CD4-positive, alpha-beta T cell (primary cell): ENCODE measurements at regions of chr15 and their contacts with region 1.

Region 1: GRCh38 chr15:95247099-95247984 is 1016.0 kb downstream of the MCTP2 start:
- DNase-seq: no peak
- ATAC-seq: no peak
- H3K4me3 ChIP-seq: no peak overlapping the region
- H3K4me3 Mint-ChIP-seq: no peak overlapping the region
- H3K27ac ChIP-seq: no peak overlapping the region
- H3K27ac Mint-ChIP-seq: no peak overlapping the region
- H3K4me1 ChIP-seq: no peaks in the 10 kb centered on the region
- H3K4me1 Mint-ChIP-seq: no peaks in the 10 kb centered on the region
- H3K27me3 ChIP-seq: no peaks in the 10 kb centered on the region
- H3K27me3 Mint-ChIP-seq: no peaks in the 10 kb centered on the region
- CTCF ChIP-seq: no peak

Region 2: DNA sequence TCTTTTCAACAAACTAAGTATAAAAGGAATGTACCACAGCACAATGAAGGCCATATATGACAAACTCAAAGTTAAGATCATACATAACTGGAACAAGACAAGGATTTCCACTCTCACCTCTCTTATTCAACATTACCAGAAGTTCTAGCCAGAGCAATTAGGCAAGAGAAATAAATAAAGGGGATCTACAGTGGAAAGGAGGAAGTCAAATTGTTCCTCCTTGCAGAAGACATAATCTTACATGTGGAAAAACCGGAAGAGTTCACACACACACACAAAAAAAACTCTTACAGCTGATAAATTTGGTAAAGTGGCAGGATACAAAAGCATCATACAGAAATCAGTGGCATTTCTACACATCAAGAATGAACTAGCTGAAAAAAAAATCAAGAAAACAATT is 738.1 kb before region 1 on chr15:
- CTCF ChIA-PET with region 1: no interaction called
- POLR2A ChIA-PET with region 1: no interaction called
- intact Hi-C with region 1: no loop called
- DNase-seq: no peak
- ATAC-seq: no peak
- H3K4me3 ChIP-seq: no peak overlapping the region
- H3K4me3 Mint-ChIP-seq: no peak overlapping the region
- H3K27ac ChIP-seq: no peak overlapping the region
- H3K27ac Mint-ChIP-seq: no peak overlapping the region
- H3K4me1 ChIP-seq: no peaks in the 10 kb centered on the region
- H3K4me1 Mint-ChIP-seq: no peaks in the 10 kb centered on the region
- H3K27me3 ChIP-seq: no peaks in the 10 kb centered on the region
- H3K27me3 Mint-ChIP-seq: no peaks in the 10 kb centered on the region
- CTCF ChIP-seq: no peak

Region 3: GRCh38 chr15:96160269-96160668 is 912.9 kb after region 1 on chr15:
- CTCF ChIA-PET with region 1: no interaction called
- POLR2A ChIA-PET with region 1: no interaction called
- intact Hi-C with region 1: loop called in 1 of 2 experiments (anchors 10 kb)
- DNase-seq: no peak
- ATAC-seq: no peak
- H3K4me3 ChIP-seq: no peak overlapping the region
- H3K4me3 Mint-ChIP-seq: no peak overlapping the region
- H3K27ac ChIP-seq: no peak overlapping the region
- H3K27ac Mint-ChIP-seq: no peak overlapping the region
- H3K4me1 ChIP-seq: no peaks in the 10 kb centered on the region
- H3K4me1 Mint-ChIP-seq: no peaks in the 10 kb centered on the region
- H3K27me3 ChIP-seq: no peaks in the 10 kb centered on the region
- H3K27me3 Mint-ChIP-seq: peaks cover 15% of the 10 kb centered on the region
- CTCF ChIP-seq: no peak